Activated B cell treated with CpG ODN at 0.5 μM for 24 hours (primary cell): ENCODE measurements at regions of chr6 and their contacts with region 1.

Region 1: GRCh38 chr6:31546962-31547726 is at the start of gene NFKBIL1:
- DNase-seq: peak; percentile 85
- ATAC-seq: peak; percentile 82
- H3K4me3 Mint-ChIP-seq: peak within 1 kb of the TSS; percentile 93
- H3K27ac Mint-ChIP-seq: peak within 1 kb of the TSS; percentile 97
- H3K4me1 Mint-ChIP-seq: peaks cover 53% of the 10 kb centered on the region
- H3K27me3 Mint-ChIP-seq: no peaks in the 10 kb centered on the region
- CTCF ChIP-seq: no peak
- total RNA-seq, gene NFKBIL1: 11.7 and 16.7 TPM in 2 replicates

Region 2: GRCh38 chr6:31568537-31568961 is 21.4 kb after region 1 on chr6:
- CTCF ChIA-PET with region 1: interaction called, 611 read pairs
- POLR2A ChIA-PET with region 1: interaction called, 234 read pairs
- intact Hi-C with region 1: no loop called
- DNase-seq: peak; percentile 39
- ATAC-seq: peak; percentile 71
- H3K4me3 Mint-ChIP-seq: peak overlapping the region; percentile 45
- H3K27ac Mint-ChIP-seq: peak overlapping the region; percentile 93
- H3K4me1 Mint-ChIP-seq: peaks cover 84% of the 10 kb centered on the region
- H3K27me3 Mint-ChIP-seq: no peaks in the 10 kb centered on the region
- CTCF ChIP-seq: no peak

Region 3: DNA sequence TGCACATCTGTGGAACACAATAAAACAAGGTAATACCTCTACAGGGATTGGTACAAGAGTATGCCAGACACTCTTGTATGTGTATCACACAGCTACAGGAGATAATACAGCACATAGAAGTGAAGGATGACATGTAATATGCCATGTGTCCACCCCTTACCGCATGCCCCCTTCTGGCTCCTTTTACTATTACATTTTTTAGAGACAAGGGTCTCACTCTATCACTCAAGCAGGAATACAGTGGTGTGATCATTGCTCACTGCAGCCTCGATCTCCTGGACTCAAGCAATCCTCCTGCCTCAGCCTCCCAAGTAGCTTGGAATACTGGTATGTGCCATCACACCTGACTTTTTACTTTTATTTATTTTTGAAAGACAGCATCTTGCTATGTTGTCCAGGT is 49.9 kb after region 1 on chr6:
- CTCF ChIA-PET with region 1: interaction called, 773 read pairs
- POLR2A ChIA-PET with region 1: interaction called, 234 read pairs
- intact Hi-C with region 1: loop called (anchors 1 kb)
- DNase-seq: no peak
- ATAC-seq: peak; percentile 73
- H3K4me3 Mint-ChIP-seq: peak overlapping the region; percentile 25
- H3K27ac Mint-ChIP-seq: peak overlapping the region; percentile 75
- H3K4me1 Mint-ChIP-seq: peaks cover 58% of the 10 kb centered on the region
- H3K27me3 Mint-ChIP-seq: no peaks in the 10 kb centered on the region
- CTCF ChIP-seq: no peak

Region 4: DNA sequence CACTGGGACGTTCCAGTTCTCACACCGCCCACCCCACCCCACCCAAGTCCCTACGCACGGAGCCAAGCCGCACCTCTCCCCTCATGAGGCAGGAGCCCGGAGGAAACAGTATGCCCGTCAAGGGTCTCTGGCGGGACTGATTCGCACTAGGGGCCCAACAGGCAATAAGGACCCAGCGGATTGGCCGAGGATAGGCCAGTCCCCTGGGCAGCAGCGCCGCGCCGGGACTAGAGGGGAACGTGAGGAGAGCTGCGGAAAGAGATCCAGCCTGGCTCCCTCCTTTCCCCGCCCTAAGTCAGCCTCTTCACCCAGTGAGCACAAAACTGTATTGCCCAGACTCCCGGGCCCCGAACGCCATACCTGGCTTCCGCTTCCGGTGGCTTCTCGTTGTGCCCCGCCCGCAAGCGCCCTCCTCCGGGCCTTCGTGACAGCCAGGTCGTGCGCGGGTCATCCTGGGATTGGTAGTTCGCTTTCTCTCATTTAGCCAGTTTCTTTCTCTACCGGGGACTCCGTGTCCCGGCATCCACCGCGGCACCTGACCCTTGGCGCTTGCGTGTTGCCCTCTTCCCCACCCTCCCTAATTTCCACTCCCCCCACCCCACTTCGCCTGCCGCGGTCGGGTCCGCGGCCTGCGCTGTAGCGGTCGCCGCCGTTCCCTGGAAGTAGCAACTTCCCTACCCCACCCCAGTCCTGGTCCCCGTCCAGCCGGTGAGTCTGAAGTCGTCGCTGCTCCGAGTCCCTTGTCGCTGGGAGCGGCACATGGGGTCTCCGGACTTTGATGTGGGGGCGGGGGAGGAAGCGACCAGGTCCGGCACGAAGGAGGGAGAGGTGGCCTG is 118.6 kb after region 1 on chr6 and contains the start of gene CSNK2B:
- CTCF ChIA-PET with region 1: interaction called, 5 read pairs
- POLR2A ChIA-PET with region 1: interaction called, 12 read pairs
- intact Hi-C with region 1: loop called (anchors 1 kb)
- DNase-seq: peak; percentile 91
- ATAC-seq: peak; percentile 86
- H3K4me3 Mint-ChIP-seq: peak within 1 kb of the TSS; percentile 96
- H3K27ac Mint-ChIP-seq: peak within 1 kb of the TSS; percentile 95
- H3K4me1 Mint-ChIP-seq: peaks cover 61% of the 10 kb centered on the region
- H3K27me3 Mint-ChIP-seq: no peaks in the 10 kb centered on the region
- CTCF ChIP-seq: no peak
- total RNA-seq, gene CSNK2B: 190 and 191 TPM in 2 replicates

Region 5: GRCh38 chr6:31729515-31729978 is 182.4 kb after region 1 on chr6:
- CTCF ChIA-PET with region 1: interaction called, 3 read pairs
- POLR2A ChIA-PET with region 1: interaction called, 9 read pairs
- intact Hi-C with region 1: loop called (anchors 1 kb)
- DNase-seq: peak; percentile 73
- ATAC-seq: peak; percentile 45
- H3K4me3 Mint-ChIP-seq: peak overlapping the region; percentile 97
- H3K27ac Mint-ChIP-seq: peak overlapping the region; percentile 92
- H3K4me1 Mint-ChIP-seq: peaks cover 71% of the 10 kb centered on the region
- H3K27me3 Mint-ChIP-seq: no peaks in the 10 kb centered on the region
- CTCF ChIP-seq: no peak

Region 6: DNA sequence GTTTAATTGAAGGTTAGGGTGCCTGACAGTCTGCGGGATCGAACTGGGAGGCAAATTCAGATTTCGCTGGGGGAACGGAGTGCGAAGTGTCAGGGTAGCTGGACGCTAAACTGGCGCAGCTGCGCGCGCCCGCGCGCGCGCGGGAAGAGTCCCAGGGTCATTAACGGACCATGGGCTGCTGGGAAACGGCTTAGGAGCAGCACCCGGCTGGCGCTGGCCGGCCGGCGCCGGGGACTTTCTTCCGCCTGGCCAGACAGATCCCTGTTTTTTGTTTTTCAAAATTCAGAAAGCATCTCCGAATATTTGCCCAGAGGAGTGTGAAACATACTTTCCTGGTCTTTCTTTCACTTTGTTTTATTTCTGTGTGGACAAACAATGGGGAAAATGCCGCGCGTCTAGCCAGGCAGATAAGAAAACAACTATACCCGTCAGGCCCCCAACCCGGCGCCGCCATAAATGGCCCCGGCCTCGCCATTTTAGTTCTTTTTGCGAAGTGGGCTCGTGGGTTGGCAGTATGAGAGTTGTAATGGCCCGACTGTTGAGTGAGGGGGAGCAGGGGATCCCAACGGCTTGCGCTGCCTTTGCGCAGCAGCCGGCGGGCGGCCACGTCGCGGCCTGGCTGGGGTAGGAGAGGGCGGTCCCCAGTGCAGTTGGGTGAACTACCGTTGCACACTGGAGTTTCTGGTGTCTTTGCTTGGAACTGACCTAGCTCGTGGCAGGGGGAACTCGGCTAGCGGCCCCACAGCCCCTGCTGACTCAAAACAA is 287.5 kb after region 1 on chr6:
- CTCF ChIA-PET with region 1: interaction called, 18 read pairs
- POLR2A ChIA-PET with region 1: interaction called, 20 read pairs
- intact Hi-C with region 1: loop called (anchors 1 kb)
- DNase-seq: peak; percentile 75
- ATAC-seq: peak; percentile 62
- H3K4me3 Mint-ChIP-seq: peak overlapping the region; percentile 99
- H3K27ac Mint-ChIP-seq: peak overlapping the region; percentile 98
- H3K4me1 Mint-ChIP-seq: peaks cover 71% of the 10 kb centered on the region
- H3K27me3 Mint-ChIP-seq: no peaks in the 10 kb centered on the region
- CTCF ChIP-seq: no peak